ENCODE measurements at regions of chr20 and their contacts with region 1.

Region 1: GRCh38 chr20:3710703-3711483 is 1.5 kb downstream of the SIGLEC1 start:
- DNase-seq: peak; percentile 81
- ATAC-seq: peak; percentile 82
- H3K4me3 Mint-ChIP-seq: no peak overlapping the region
- H3K27ac Mint-ChIP-seq: no peak overlapping the region
- H3K4me1 Mint-ChIP-seq: no peaks in the 10 kb centered on the region
- H3K27me3 Mint-ChIP-seq: peaks cover 6% of the 10 kb centered on the region

Region 2: DNA sequence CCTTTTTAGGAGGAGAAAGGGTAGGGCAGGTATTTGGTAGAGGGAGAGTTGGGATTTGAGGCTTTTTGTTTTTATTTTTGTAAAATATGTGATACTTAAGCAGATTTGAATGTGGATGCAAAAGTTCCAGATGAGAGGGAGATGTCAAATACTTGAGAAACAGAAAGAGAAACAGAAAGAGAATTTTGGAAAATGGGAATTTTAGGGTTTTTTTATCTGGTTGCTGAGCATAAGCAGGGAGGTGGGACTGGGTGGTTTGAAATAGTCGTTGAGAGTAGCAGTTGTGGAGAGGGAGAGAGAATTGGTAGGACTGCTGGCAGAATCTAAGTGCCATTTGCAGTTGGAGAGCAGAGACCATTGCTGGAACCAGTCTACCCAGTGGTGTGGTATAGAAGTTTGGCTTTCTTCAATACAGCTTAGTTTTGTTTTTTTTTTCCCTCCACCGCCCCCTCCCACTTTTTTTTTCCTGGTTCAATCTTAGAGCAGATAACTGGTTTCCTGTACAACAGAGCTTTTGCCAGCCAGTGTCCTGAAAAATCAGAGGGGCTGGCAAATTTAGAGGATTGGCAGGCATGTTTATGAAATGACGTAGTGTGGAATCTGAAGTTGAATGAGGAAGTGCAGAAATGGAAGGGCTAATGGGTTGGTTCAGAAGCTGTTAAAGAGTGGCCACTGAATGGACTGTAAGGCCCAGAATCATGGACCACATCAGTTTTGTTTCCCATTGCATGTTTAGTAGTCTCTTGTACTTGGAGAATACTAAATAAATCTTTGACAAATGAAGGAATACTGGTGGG is 171.4 kb before region 1 on chr20:
- CTCF ChIA-PET with region 1: no interaction called
- POLR2A ChIA-PET with region 1: no interaction called
- DNase-seq: no peak
- ATAC-seq: no peak
- H3K4me3 Mint-ChIP-seq: no peak overlapping the region
- H3K27ac Mint-ChIP-seq: no peak overlapping the region
- H3K4me1 Mint-ChIP-seq: no peaks in the 10 kb centered on the region
- H3K27me3 Mint-ChIP-seq: no peaks in the 10 kb centered on the region

Region 3: GRCh38 chr20:3696200-3696599 is 14.7 kb before region 1 on chr20:
- CTCF ChIA-PET with region 1: interaction called, 48 read pairs
- POLR2A ChIA-PET with region 1: no interaction called
- DNase-seq: no peak
- ATAC-seq: no peak
- H3K4me3 Mint-ChIP-seq: no peak overlapping the region
- H3K27ac Mint-ChIP-seq: no peak overlapping the region
- H3K4me1 Mint-ChIP-seq: no peaks in the 10 kb centered on the region
- H3K27me3 Mint-ChIP-seq: no peaks in the 10 kb centered on the region

Region 4: DNA sequence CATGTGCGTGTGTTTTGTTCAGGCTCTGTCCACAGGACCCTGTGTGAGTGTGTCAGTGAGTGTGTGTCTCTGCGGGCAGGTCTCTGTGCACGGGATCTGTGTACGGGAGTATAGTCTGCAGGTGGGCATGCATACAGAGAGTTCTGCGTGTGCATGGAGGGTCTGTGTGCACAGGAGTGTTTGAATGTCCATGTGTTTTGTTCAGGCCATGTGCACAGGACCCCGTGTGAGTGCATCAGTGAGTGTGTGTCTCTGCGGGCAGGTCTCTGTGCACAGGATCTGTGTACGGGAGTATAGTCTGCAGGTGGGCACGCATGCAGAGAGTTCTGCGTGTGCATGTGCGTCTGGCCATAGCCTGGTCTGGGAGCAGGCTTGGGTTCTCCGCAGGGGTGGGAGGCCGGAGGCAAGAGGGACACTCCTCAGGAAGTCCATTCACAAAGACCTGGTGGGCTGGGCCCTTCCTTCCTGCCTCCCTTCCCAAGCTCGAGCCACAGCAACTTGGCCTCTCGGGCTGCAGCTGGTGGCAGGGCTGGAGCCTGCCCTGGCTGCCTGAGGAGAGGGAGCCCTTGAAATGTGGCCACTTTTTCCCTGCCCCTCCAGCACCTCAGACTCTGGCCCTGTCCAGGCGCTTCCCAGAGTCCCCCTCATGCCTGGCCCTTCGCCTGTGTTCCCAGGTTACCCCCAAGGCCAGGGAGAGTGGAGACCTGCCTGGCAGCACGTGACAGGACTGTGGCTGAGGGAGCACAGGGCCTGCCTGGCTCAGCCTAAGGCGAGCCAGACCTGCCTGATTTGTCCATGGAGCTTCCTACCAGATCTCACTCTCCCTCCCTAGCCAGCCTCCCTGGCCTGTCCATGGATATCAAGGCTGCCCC is 28.4 kb after region 1 on chr20:
- CTCF ChIA-PET with region 1: interaction called, 10 read pairs
- POLR2A ChIA-PET with region 1: interaction called, 4 read pairs
- DNase-seq: no peak
- ATAC-seq: no peak
- H3K4me3 Mint-ChIP-seq: no peak overlapping the region
- H3K27ac Mint-ChIP-seq: no peak overlapping the region
- H3K4me1 Mint-ChIP-seq: peaks cover 2% of the 10 kb centered on the region
- H3K27me3 Mint-ChIP-seq: peaks cover 21% of the 10 kb centered on the region

Region 5: GRCh38 chr20:4038047-4038459 is 327.2 kb after region 1 on chr20:
- CTCF ChIA-PET with region 1: no interaction called
- POLR2A ChIA-PET with region 1: no interaction called
- DNase-seq: peak; percentile 96
- ATAC-seq: peak; percentile 100
- H3K4me3 Mint-ChIP-seq: peak overlapping the region; percentile 83
- H3K27ac Mint-ChIP-seq: peak overlapping the region; percentile 99
- H3K4me1 Mint-ChIP-seq: peaks cover 27% of the 10 kb centered on the region
- H3K27me3 Mint-ChIP-seq: no peaks in the 10 kb centered on the region